ENCODE measurements at regions of chr1 and their contacts with region 1.

Region 1: DNA sequence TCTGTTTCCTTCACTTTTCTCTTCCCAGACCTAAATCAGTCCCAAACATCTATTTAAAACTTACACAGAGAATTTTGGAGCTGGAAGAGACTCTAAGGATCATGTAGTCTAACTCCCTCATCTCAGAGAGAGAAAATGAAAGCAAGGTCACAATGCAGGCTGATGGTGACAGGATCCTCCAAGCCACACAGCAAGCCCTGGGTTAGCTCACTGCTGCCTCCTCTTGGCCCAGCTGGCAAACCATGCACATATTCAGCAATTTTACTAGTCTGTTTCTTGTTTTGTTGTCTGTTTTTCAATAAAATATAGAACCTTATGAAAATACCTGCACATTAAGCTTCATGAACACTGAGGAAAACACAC is 27.7 kb upstream of the LY9 start:
- DNase-seq: peak; percentile 92
- H3K4me3 Mint-ChIP-seq: peak overlapping the region; percentile 72
- H3K27ac Mint-ChIP-seq: peak overlapping the region; percentile 97
- H3K4me1 Mint-ChIP-seq: peaks cover 38% of the 10 kb centered on the region
- H3K27me3 Mint-ChIP-seq: no peaks in the 10 kb centered on the region

Region 2: GRCh38 chr1:160534823-160535605 is 233.3 kb before region 1 on chr1:
- CTCF ChIA-PET with region 1: no interaction called
- POLR2A ChIA-PET with region 1: no interaction called
- DNase-seq: no peak
- H3K4me3 Mint-ChIP-seq: no peak overlapping the region
- H3K27ac Mint-ChIP-seq: no peak overlapping the region
- H3K4me1 Mint-ChIP-seq: peaks cover 19% of the 10 kb centered on the region
- H3K27me3 Mint-ChIP-seq: no peaks in the 10 kb centered on the region

Region 3: DNA sequence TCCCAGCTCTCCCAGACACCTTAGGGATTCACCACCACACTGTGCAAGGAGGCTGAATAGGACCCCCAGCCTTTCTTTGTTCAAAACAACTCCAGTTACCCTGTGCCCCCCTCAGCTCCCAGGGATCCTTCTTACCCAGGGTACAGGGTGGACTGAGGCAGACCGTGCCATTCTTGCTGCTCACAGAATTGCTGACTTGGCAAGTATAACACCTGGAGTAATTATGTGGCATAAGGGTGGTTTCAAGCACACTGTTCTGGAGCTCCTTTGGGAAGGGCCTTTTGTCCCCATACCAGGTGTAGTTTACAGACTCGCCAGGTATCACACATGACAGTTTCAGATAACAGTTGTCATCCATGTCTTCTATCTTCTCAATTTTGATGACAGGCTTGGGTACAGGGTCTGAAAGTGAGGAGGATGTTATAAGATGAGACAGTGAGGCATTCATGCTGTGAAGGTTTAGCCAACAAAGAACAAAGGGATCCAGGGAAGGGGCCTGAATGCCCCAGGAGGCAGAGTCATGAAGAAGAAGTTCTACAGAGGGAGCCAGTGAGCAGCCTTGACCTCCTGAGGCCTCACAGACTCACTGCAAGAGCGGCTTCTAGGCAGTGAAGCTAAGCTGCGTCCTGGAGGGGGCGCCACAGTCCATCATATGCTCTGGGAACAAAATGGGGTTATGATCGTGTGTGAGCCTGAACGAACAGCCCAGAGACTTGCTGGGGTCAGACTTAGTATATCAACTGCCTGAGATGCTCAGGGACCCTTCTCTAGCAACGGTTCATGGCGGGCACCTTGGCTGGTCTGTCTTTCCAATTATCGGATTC is 87.0 kb before region 1 on chr1:
- CTCF ChIA-PET with region 1: interaction called, 49 read pairs
- POLR2A ChIA-PET with region 1: interaction called, 4 read pairs
- DNase-seq: peak; percentile 90
- H3K4me3 Mint-ChIP-seq: no peak overlapping the region
- H3K27ac Mint-ChIP-seq: peak overlapping the region; percentile 91
- H3K4me1 Mint-ChIP-seq: peaks cover 71% of the 10 kb centered on the region
- H3K27me3 Mint-ChIP-seq: no peaks in the 10 kb centered on the region

Region 4: GRCh38 chr1:160739098-160739511 is 29.2 kb before region 1 on chr1 and contains the start of gene SLAMF7:
- CTCF ChIA-PET with region 1: interaction called, 11 read pairs
- POLR2A ChIA-PET with region 1: interaction called, 7 read pairs
- DNase-seq: peak; percentile 11
- H3K4me3 Mint-ChIP-seq: peak within 1 kb of the TSS; percentile 60
- H3K27ac Mint-ChIP-seq: peak within 1 kb of the TSS; percentile 74
- H3K4me1 Mint-ChIP-seq: peaks cover 67% of the 10 kb centered on the region
- H3K27me3 Mint-ChIP-seq: no peaks in the 10 kb centered on the region
- total RNA-seq, gene SLAMF7: 12.8 to 13.4 TPM

Region 5: GRCh38 chr1:160755911-160756848 is 12.1 kb before region 1 on chr1:
- CTCF ChIA-PET with region 1: interaction called, 14 read pairs
- POLR2A ChIA-PET with region 1: no interaction called
- DNase-seq: no peak
- H3K4me3 Mint-ChIP-seq: no peak overlapping the region
- H3K27ac Mint-ChIP-seq: peak overlapping the region; percentile 78
- H3K4me1 Mint-ChIP-seq: peaks cover 46% of the 10 kb centered on the region
- H3K27me3 Mint-ChIP-seq: no peaks in the 10 kb centered on the region